ENCODE measurements at regions of chr2 and their contacts with region 1.

Region 1: DNA sequence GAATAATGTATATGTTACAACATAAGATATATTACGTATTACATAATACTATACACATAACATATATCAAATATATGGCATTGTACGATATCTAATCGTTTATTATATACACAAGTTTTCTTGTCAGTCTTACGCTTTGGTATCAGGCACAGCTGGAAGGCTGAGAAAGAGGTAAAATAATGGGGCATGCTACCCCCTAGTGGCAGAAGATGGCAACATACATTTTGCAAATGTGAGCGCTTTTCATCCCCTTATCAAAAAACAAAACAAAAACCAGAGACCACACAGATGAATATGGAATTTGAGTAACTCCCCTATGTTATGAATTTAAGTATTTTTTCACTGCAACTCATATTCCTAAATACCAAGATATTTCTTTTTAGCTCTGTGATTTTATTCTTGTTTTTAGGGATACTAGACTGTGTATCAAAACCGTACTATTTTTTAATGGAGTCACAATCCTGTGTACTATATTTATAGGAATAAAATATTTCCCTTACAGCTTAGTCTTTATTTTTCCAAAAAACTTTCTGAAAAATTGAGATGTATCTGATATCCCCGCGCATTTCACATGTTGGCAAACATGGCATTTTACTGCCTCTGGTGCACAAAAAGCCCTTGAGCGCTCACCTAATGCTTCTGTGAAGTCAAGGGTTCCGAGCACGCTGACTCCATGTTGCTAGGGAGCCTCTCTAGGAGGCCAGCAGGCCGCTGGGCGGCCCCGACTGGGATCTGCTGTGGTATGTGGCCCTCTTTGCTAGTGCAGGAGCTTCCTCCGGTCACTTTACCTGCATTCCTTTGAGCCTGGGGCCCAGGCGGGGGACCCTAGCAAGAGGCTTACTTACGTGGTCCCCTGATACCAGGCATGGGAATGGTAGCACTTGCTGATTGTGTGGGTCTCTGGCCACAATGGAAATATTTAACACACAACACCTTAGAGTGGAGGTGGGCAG is 62.5 kb downstream of the SLC4A3 start:
- DNase-seq: peak; percentile 23
- ATAC-seq: peak; percentile 62
- H3K4me3 ChIP-seq: no peak overlapping the region
- H3K27ac ChIP-seq: no peak overlapping the region
- H3K4me1 ChIP-seq: peaks cover under 1% of the 10 kb centered on the region; the same call in 1 of the 2 replicates
- H3K27me3 ChIP-seq: peaks cover 0 to 2% of the 10 kb centered on the region in 2 experiments; a peak in 1 of 4 replicates
- CTCF ChIP-seq: peak; percentile 63 to 77 (median 66)
- EP300 ChIP-seq: no peak
- POLR2A ChIP-seq: no peak
- RAD21 ChIP-seq: peak; percentile 69

Region 2: DNA sequence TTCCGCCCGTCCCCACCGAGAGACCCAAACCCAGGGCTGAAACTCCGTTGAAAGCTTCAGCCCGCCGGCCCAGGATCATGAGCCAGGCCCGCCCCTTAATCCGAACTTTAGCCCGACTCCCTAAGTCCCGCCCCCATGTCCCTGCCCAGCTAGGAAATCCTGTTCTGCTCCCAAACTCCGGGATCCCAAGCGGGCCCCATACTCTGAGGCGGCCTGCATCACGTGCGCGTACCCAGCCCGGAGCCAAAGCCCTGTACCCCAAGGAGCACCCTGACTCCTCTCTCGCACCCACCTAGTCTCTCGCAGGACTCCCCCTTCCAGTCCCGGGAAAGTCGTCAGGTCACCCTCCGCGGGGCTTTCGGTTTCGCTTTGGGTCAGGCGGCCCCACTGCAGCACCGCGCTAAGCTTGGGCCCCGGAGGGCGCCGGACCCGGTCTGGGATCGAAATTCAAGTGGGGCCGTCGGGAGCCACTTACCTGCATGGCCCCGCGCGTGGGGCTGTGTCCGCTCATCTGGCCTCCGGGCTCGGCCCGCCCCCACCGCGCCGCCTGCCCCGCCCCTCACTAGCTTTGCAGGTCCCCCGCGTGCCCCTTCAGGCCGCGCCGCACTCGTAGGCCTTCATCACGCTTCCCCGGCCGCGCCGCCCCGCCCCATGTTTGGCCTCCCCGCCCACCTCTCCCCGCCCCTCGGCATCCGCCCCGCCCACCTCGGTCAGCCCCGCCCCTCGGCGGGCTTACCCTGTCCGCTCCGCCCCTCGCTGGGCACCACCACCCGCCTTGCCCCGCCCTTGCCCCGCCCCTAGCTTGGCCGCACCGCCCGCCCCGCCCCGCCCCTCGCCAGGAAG is 302.4 kb before region 1 on chr2 and contains the start of gene DNPEP:
- CTCF ChIA-PET with region 1: no interaction called
- POLR2A ChIA-PET with region 1: no interaction called
- RAD21 ChIA-PET with region 1: no interaction called
- SMC1A ChIA-PET with region 1: no interaction called
- in situ Hi-C with region 1: no loop called
- intact Hi-C with region 1: no loop called
- DNase-seq: peak; percentile 44
- ATAC-seq: peak; percentile 77
- H3K4me3 ChIP-seq: peak within 1 kb of the TSS; percentile 93
- H3K27ac ChIP-seq: peak within 1 kb of the TSS; percentile 71
- H3K4me1 ChIP-seq: peaks cover 5% of the 10 kb centered on the region
- H3K27me3 ChIP-seq: no peaks in the 10 kb centered on the region
- CTCF ChIP-seq: no peak
- EP300 ChIP-seq: no peak
- POLR2A ChIP-seq: peak; percentile 65
- RAD21 ChIP-seq: no peak
- polyA plus RNA-seq, gene DNPEP: 33.1 to 56.3 TPM

Region 3: DNA sequence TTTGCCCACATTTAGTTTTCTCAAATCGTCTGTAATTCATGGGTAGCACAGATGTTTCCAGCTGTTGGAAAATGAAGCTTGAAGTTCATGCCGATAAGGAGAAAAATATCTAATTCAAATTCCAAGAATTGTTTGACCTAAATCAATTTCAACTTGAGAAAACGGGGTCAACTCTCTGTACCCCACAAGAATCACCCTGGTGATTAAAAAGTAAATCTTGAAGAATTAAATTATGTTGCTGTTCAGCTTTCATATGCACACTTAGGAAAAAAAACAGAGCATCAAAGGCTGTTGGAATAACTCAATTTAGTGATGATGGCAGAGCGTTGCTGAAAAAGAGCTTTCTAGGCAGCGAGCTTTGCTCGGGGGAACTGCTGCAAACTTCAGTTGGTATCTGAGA is 19.6 kb before region 1 on chr2:
- CTCF ChIA-PET with region 1: interaction called, 10 read pairs
- POLR2A ChIA-PET with region 1: interaction called, 4 read pairs
- RAD21 ChIA-PET with region 1: no interaction called
- SMC1A ChIA-PET with region 1: interaction called, 4 read pairs
- in situ Hi-C with region 1: no loop called
- intact Hi-C with region 1: no loop called
- DNase-seq: no peak
- ATAC-seq: no peak
- H3K4me3 ChIP-seq: no peak overlapping the region
- H3K27ac ChIP-seq: no peak overlapping the region
- H3K4me1 ChIP-seq: no peaks in the 10 kb centered on the region
- H3K27me3 ChIP-seq: peaks cover 0 to 2% of the 10 kb centered on the region in 2 experiments; a peak in 1 of 4 replicates
- CTCF ChIP-seq: no peak
- EP300 ChIP-seq: no peak
- POLR2A ChIP-seq: no peak
- RAD21 ChIP-seq: no peak

Region 4: GRCh38 chr2:219870041-219870440 is 180.1 kb after region 1 on chr2:
- CTCF ChIA-PET with region 1: no interaction called
- POLR2A ChIA-PET with region 1: no interaction called
- RAD21 ChIA-PET with region 1: no interaction called
- SMC1A ChIA-PET with region 1: no interaction called
- in situ Hi-C with region 1: no loop called
- intact Hi-C with region 1: no loop called
- DNase-seq: no peak
- ATAC-seq: no peak
- H3K4me3 ChIP-seq: no peak overlapping the region
- H3K27ac ChIP-seq: no peak overlapping the region
- H3K4me1 ChIP-seq: no peaks in the 10 kb centered on the region
- H3K27me3 ChIP-seq: no peaks in the 10 kb centered on the region; a peak in 1 of 4 replicates
- CTCF ChIP-seq: no peak
- EP300 ChIP-seq: no peak
- POLR2A ChIP-seq: no peak
- RAD21 ChIP-seq: no peak